Caco-2 (cell line): ENCODE measurements at regions of chr10 and their contacts with region 1.

Region 1: DNA sequence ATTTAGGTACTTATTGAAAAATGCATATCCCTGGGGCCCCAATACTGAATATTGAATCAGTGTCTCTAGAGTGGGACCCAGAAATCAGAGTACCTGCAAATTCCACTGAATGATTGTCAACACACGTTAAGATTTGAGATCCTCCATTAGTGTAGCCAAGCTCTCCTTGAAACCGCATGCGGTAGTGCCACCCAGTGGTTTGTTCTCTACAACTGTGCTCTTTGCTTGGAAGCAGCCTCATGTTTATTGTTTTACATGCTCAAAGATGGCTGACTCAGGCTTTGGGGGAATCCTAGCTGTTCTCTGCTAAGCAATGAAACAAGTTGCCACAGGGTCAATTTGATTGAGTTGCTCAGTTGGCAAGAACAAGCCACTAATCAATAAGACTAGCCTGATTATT is 340.2 kb upstream of the CELF2 start:
- DNase-seq: peak; percentile 63 to 66
- H3K4me3 ChIP-seq: no peak overlapping the region
- H3K4me3 Mint-ChIP-seq: no peak overlapping the region
- H3K27ac Mint-ChIP-seq: no peak overlapping the region
- H3K4me1 ChIP-seq: peaks cover 19% of the 10 kb centered on the region
- H3K4me1 Mint-ChIP-seq: peaks cover 7% of the 10 kb centered on the region
- H3K27me3 ChIP-seq: no peaks in the 10 kb centered on the region
- H3K27me3 Mint-ChIP-seq: no peaks in the 10 kb centered on the region
- CTCF ChIP-seq: peak; percentile 41 to 42

Region 2: DNA sequence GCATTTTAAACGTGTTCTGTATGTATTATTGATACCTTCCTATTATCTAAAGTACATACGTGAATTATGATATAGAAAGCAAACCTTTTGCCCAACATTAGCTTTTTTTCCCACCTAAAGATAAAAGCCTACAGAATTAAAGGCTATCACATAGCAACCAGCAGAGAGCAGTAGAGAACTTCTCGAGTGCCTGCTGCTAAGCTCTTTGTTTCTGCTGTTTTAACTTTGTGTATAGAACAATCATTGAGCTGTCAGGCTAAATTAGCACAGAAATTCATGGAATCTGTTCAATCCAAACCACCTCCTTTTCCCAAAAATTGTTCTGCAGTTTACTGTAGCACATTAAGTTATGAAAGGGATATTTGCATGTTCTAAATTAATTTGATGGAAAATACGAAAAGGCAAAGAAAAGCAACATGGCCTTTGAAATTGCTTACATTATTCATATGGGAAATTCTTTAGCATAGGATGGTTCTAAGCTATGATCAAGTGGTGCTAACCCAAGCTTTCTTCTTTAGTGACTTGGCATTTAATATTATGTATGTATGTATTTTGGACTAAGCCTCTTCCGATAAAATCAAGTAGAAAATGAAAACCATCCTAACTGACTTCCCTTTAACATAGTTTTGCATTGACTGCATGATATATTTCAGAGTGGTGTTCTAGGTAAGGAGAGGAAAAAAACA is 1334.5 kb before region 1 on chr10:
- CTCF ChIA-PET with region 1: interaction called, 3 read pairs
- POLR2A ChIA-PET with region 1: no interaction called
- intact Hi-C with region 1: loop called (anchors 5 kb)
- DNase-seq: peak in 1 of 2 experiments; percentile 46
- H3K4me3 ChIP-seq: no peak overlapping the region
- H3K4me3 Mint-ChIP-seq: no peak overlapping the region
- H3K27ac Mint-ChIP-seq: no peak overlapping the region
- H3K4me1 ChIP-seq: no peaks in the 10 kb centered on the region
- H3K4me1 Mint-ChIP-seq: no peaks in the 10 kb centered on the region
- H3K27me3 ChIP-seq: no peaks in the 10 kb centered on the region
- H3K27me3 Mint-ChIP-seq: peaks cover 10% of the 10 kb centered on the region
- CTCF ChIP-seq: peak; percentile 76 to 85

Region 3: GRCh38 chr10:9762966-9763656 is 914.4 kb before region 1 on chr10:
- CTCF ChIA-PET with region 1: no interaction called
- POLR2A ChIA-PET with region 1: no interaction called
- intact Hi-C with region 1: loop called (anchors 10 kb)
- DNase-seq: no peak
- H3K4me3 ChIP-seq: no peak overlapping the region
- H3K4me3 Mint-ChIP-seq: no peak overlapping the region
- H3K27ac Mint-ChIP-seq: no peak overlapping the region
- H3K4me1 ChIP-seq: no peaks in the 10 kb centered on the region
- H3K4me1 Mint-ChIP-seq: no peaks in the 10 kb centered on the region
- H3K27me3 ChIP-seq: no peaks in the 10 kb centered on the region
- H3K27me3 Mint-ChIP-seq: no peaks in the 10 kb centered on the region
- CTCF ChIP-seq: no peak

Region 4: DNA sequence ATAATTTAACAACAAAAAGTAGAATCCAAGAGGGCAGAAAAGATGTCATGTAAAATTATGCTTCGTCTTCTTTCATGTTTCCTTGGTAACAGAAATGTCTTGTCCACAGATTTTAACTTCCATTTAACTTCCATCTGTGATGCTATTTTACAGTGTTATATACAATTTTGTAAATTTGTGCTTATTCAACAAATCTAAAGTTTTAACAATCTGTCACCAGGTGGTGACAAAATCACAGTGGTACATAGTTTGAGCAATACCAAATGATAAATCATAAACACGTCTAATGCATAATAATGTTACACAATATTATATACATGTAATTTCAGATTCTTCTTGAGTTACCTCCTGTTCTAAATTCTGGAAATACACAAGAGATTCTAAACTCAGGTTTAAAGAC is 444.2 kb before region 1 on chr10:
- CTCF ChIA-PET with region 1: no interaction called
- POLR2A ChIA-PET with region 1: no interaction called
- intact Hi-C with region 1: loop called (anchors 2 kb)
- DNase-seq: no peak
- H3K4me3 ChIP-seq: no peak overlapping the region
- H3K4me3 Mint-ChIP-seq: no peak overlapping the region
- H3K27ac Mint-ChIP-seq: no peak overlapping the region
- H3K4me1 ChIP-seq: no peaks in the 10 kb centered on the region
- H3K4me1 Mint-ChIP-seq: no peaks in the 10 kb centered on the region
- H3K27me3 ChIP-seq: no peaks in the 10 kb centered on the region
- H3K27me3 Mint-ChIP-seq: peaks cover 3% of the 10 kb centered on the region
- CTCF ChIP-seq: no peak

Region 5: GRCh38 chr10:10489805-10490571 is 187.5 kb before region 1 on chr10:
- CTCF ChIA-PET with region 1: no interaction called
- POLR2A ChIA-PET with region 1: no interaction called
- intact Hi-C with region 1: no loop called
- DNase-seq: no peak
- H3K4me3 ChIP-seq: no peak overlapping the region
- H3K4me3 Mint-ChIP-seq: no peak overlapping the region
- H3K27ac Mint-ChIP-seq: no peak overlapping the region
- H3K4me1 ChIP-seq: no peaks in the 10 kb centered on the region
- H3K4me1 Mint-ChIP-seq: no peaks in the 10 kb centered on the region
- H3K27me3 ChIP-seq: no peaks in the 10 kb centered on the region
- H3K27me3 Mint-ChIP-seq: peaks cover 12% of the 10 kb centered on the region
- CTCF ChIP-seq: no peak

Region 6: GRCh38 chr10:10589540-10590303 is 87.8 kb before region 1 on chr10:
- CTCF ChIA-PET with region 1: no interaction called
- POLR2A ChIA-PET with region 1: no interaction called
- intact Hi-C with region 1: no loop called
- DNase-seq: no peak
- H3K4me3 ChIP-seq: no peak overlapping the region
- H3K4me3 Mint-ChIP-seq: no peak overlapping the region
- H3K27ac Mint-ChIP-seq: no peak overlapping the region
- H3K4me1 ChIP-seq: no peaks in the 10 kb centered on the region
- H3K4me1 Mint-ChIP-seq: no peaks in the 10 kb centered on the region
- H3K27me3 ChIP-seq: no peaks in the 10 kb centered on the region
- H3K27me3 Mint-ChIP-seq: peaks cover 11% of the 10 kb centered on the region
- CTCF ChIP-seq: no peak

Region 7: DNA sequence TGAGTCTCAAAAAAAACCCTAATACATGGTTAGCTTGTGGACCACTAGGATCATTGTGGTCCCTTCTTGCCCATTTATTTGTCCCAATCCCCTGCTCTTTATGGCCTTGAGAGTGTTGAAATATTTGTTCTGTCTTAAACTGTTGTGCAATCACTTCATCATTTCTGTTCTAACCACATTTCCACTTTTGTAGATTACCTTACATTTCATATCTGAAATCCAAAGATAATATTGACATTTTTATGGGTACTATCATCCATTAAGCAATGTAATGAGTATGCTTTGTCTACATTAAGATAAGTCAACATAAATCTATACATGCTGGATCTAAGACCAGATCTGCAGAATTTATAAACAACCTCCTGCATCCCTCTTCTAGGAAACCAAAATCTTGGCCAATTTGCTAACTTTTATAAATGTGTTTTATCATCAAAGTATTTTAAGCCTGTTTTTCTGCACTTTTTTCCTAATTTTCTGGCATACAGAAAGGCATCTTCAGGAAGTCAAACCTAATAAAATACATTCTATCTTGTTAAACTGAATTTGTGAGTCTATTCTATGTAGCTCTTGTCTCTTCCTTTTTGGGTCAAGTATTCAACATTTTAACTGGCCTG is 19.2 kb before region 1 on chr10:
- CTCF ChIA-PET with region 1: no interaction called
- POLR2A ChIA-PET with region 1: no interaction called
- intact Hi-C with region 1: loop called (anchors 1 kb)
- DNase-seq: no peak
- H3K4me3 ChIP-seq: no peak overlapping the region
- H3K4me3 Mint-ChIP-seq: no peak overlapping the region
- H3K27ac Mint-ChIP-seq: no peak overlapping the region
- H3K4me1 ChIP-seq: no peaks in the 10 kb centered on the region
- H3K4me1 Mint-ChIP-seq: no peaks in the 10 kb centered on the region
- H3K27me3 ChIP-seq: no peaks in the 10 kb centered on the region
- H3K27me3 Mint-ChIP-seq: peaks cover 9% of the 10 kb centered on the region
- CTCF ChIP-seq: no peak

Region 8: GRCh38 chr10:11036407-11037011 is 359.0 kb after region 1 on chr10:
- CTCF ChIA-PET with region 1: no interaction called
- POLR2A ChIA-PET with region 1: no interaction called
- intact Hi-C with region 1: loop called (anchors 5 kb)
- DNase-seq: peak; percentile 67 to 70
- H3K4me3 ChIP-seq: no peak overlapping the region
- H3K4me3 Mint-ChIP-seq: no peak overlapping the region
- H3K27ac Mint-ChIP-seq: no peak overlapping the region
- H3K4me1 ChIP-seq: no peaks in the 10 kb centered on the region
- H3K4me1 Mint-ChIP-seq: no peaks in the 10 kb centered on the region
- H3K27me3 ChIP-seq: no peaks in the 10 kb centered on the region; the same call in 1 of the 2 replicates
- H3K27me3 Mint-ChIP-seq: peaks cover 5% of the 10 kb centered on the region
- CTCF ChIP-seq: peak; percentile 71 to 81